ENCODE measurements at regions of chr11 and their contacts with region 1.

Region 1: DNA sequence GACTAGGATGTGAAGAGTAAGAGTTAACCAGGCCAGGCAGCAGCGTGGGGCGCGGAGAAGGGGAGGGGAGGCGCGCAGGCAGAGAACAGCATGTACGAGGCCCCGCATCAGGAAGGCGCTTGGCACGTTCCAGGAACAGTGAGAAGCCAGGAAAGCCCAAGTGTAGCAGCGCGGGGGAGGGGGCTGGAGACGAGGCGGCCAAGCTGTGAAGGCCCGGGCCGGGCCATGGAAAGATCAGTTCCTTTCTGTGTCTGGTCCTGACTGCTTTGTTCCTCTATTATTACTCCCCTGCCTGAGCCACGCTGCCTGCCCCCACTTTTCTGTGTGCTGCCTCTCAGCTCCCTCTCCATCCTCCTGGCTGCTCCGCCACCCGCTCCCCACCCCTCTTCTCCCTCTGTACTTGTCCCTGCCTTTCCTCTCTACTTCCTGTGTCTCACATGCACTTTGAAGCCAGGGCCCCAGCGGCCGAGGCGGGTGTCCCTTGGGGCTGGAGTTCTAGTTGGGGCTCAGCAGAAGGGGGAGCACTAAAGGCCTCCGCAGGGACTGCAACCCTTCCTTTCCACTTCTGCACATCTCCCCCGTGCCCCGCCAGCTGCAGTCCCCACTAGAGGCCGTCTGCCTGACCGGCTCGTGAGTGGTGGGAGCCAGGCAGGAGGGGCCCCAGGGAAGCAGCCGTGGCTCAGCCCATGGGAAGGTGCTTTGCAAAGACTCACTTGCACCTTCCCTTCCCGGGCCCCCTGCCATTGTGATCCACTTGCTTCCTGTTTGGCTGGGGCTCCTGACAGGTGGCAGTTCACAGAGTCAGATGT is 63.7 kb downstream of the PRDM11 start:
- DNase-seq: peak; percentile 93 to 98 (median 95)
- ATAC-seq: peak; percentile 95
- H3K4me3 ChIP-seq: no peak overlapping the region
- H3K27ac ChIP-seq: peak overlapping the region; percentile 86
- H3K4me1 ChIP-seq: peaks cover 22% of the 10 kb centered on the region
- H3K27me3 ChIP-seq: no peaks in the 10 kb centered on the region

Region 2: DNA sequence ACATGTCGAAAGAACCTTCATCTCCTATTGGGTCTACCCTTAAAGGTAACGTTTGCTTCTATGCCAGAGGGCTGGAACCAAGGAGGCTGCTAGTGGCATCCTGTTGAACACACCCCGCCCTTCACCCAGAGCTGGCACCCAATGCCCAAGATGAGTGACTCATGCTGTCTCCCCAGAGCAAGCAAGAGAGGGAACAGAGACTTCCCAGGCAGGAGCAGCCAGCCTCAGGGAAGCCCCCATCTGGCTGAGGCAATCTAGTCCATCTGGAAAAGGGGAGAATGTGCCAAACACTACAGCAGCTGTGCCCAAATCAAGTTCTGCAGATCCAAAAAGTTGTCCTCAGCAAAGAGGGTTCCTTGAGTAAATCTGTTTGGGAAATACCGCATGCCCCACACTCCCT is 167.5 kb before region 1 on chr11:
- intact Hi-C with region 1: no loop called
- DNase-seq: no peak
- ATAC-seq: peak; percentile 28 to 42
- H3K4me3 ChIP-seq: no peak overlapping the region
- H3K27ac ChIP-seq: no peak overlapping the region
- H3K4me1 ChIP-seq: peaks cover 6% of the 10 kb centered on the region
- H3K27me3 ChIP-seq: no peaks in the 10 kb centered on the region

Region 3: DNA sequence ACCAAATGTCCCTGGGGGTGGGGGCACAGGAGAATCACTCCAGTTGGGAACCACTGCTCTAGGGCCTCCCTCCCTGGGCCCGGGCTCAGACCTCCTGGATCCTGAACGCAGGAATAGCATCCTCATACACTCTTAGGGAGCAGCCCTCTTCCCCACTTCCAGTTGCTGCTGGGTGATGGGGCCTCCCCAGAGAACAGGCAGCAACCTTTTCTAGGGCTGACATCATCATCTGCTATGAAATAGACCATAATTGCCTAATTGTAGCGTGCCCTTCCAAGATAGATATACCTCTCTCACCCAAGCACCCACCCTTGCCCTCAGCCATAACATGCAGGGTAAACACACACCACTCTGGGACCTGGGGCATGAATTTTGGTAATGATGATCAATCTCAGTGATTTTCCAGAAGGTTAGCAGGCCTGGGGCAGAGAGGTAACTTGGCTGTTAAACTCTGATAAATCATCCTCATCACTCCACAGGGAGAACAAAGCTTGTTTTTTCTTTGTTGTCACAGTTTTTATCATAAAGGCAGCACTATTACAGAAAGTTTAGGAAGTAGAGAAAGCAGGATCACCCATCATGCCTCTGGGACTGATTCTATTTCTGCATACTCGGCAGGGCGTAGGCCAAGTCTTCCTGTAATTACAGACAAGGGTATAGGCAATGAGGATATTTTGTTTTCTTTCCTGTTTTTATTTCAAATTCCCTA is 152.0 kb before region 1 on chr11:
- intact Hi-C with region 1: no loop called
- DNase-seq: no peak
- ATAC-seq: peak in 1 of 2 donors; percentile 27
- H3K4me3 ChIP-seq: no peak overlapping the region
- H3K27ac ChIP-seq: peak overlapping the region; percentile 39
- H3K4me1 ChIP-seq: no peaks in the 10 kb centered on the region
- H3K27me3 ChIP-seq: no peaks in the 10 kb centered on the region

Region 4: DNA sequence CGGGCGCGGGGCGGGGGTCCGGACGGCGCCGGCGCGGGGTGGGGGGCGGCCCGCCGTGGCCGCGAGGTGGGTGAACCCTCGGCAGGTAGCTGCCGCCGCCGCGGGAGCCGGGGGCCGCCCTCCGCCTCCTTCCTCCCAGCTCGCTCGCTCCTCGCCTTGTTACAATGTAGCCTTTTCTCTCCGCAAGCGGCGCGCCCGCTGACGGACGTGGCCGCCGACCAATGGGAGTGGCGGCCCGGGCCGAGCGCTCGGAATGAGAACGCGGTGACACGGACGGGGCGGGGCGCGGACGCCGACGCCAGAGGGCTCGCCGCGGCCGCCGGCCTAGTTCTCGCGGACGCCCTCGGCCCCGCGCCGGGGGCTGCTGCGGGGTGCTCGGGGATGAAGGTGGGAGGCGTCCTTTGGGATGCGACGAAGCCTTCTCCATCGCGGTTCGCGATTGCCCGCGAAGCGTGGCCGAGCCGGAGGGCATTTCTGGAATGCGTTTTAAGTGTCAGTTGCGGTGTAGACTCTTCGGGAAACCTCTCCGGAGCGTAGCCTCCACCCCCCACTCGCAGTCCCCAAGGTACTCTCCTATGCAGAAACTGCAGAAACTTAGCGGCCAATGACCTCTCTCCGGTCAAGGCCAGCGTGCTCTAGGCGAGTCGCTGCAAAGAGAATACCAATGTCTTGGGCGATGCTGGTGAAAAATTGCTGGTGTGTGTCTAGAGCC is 62.9 kb before region 1 on chr11:
- intact Hi-C with region 1: loop called in 1 of 4 experiments (anchors 10 kb)
- DNase-seq: peak; percentile 96 to 99 (median 99)
- ATAC-seq: peak; percentile 96 to 97
- H3K4me3 ChIP-seq: peak overlapping the region; percentile 74
- H3K27ac ChIP-seq: peak overlapping the region; percentile 59
- H3K4me1 ChIP-seq: peaks cover 8% of the 10 kb centered on the region
- H3K27me3 ChIP-seq: no peaks in the 10 kb centered on the region

Region 5: GRCh38 chr11:45278714-45279113 is 68.6 kb after region 1 on chr11:
- intact Hi-C with region 1: no loop called
- DNase-seq: no peak
- ATAC-seq: no peak
- H3K4me3 ChIP-seq: no peak overlapping the region
- H3K27ac ChIP-seq: no peak overlapping the region
- H3K4me1 ChIP-seq: no peaks in the 10 kb centered on the region
- H3K27me3 ChIP-seq: no peaks in the 10 kb centered on the region

Region 6: GRCh38 chr11:45301537-45302246 is 91.6 kb after region 1 on chr11:
- intact Hi-C with region 1: loop called in 1 of 4 experiments (anchors 10 kb)
- DNase-seq: no peak
- ATAC-seq: no peak
- H3K4me3 ChIP-seq: no peak overlapping the region
- H3K27ac ChIP-seq: no peak overlapping the region
- H3K4me1 ChIP-seq: no peaks in the 10 kb centered on the region
- H3K27me3 ChIP-seq: no peaks in the 10 kb centered on the region

Measured in right cardiac atrium (tissue), 5 donors.